Ovary (tissue), 10 donors: ENCODE measurements at regions of chr22 and their contacts with region 1.

Region 1: DNA sequence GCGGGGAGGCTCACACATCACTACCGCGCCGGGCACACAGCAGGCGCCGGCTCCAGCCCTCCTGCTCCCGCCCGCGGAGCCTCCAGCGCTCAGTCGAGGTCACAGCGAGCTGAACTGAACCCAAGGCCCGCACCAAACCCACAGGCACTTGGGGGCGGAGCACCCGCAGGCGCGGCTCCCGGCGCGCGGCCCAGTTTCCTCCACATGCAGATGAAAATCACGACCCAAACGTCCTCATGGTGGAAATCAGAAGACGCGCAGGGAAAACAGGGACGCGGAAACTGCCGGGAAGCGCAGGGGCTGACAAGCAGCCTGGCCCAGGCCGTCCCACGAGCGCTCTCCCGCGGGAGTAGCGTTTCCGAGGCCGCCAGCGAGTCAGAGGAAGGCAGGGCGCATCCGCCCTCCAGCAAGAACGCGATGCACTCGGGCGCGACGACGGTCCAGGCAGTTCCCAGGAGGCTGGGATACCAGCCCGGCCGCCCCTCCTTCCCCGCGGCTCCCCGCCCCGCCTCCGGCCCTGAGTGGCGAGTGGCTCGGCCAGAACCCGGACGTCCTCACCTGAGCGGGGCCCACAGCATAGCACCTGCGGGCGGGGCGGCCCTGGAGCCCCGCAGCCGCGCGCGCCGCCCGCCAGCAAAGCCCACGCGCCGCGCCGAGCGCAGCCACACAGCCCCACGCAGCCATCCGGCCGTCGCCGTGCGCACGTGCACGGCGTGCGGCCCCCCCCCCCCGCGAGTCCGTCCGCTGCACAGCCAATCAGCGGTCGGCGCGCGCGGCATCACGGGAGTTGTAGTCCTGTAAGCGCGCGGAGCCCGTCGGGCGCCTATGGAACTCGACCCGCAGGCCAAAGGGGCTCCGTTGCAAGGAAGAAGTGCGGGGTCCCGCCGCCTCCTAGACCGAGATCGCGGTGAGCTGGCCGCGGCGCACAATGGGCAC is at the start of gene HDHD5:
- DNase-seq: peak; percentile 85 to 92 (median 90)
- H3K4me3 ChIP-seq: peak within 1 kb of the TSS; percentile 77
- H3K27ac ChIP-seq: peak within 1 kb of the TSS; percentile 74 to 93
- H3K4me1 ChIP-seq: peaks cover 14% of the 10 kb centered on the region
- H3K27me3 ChIP-seq: no peaks in the 10 kb centered on the region
- CTCF ChIP-seq: no peak
- EP300 ChIP-seq: no peak
- POLR2A ChIP-seq: no peak
- total RNA-seq, gene HDHD5: 17.2 to 29.5 (median 24.5) TPM

Region 2: GRCh38 chr22:17084554-17085276 is 74.1 kb before region 1 on chr22 and contains the start of gene IL17RA:
- intact Hi-C with region 1: loop called in 1 of 4 experiments (anchors 10 kb)
- DNase-seq: peak; percentile 87 to 91 (median 90)
- H3K4me3 ChIP-seq: peak within 1 kb of the TSS; percentile 60
- H3K27ac ChIP-seq: peak within 1 kb of the TSS; percentile 68 to 70
- H3K4me1 ChIP-seq: peaks cover 4% of the 10 kb centered on the region
- H3K27me3 ChIP-seq: no peaks in the 10 kb centered on the region
- CTCF ChIP-seq: no peak
- EP300 ChIP-seq: no peak
- POLR2A ChIP-seq: peak; percentile 40
- total RNA-seq, gene IL17RA: 7.3 to 18.1 (median 14.0) TPM